Heart left ventricle (tissue), 16 donors: ENCODE measurements at regions of chr1 and their contacts with region 1.

Region 1: GRCh38 chr1:22052115-22053016 is at the start of gene CDC42:
- DNase-seq: peak; percentile 97 to 98 (median 98)
- ATAC-seq: peak; percentile 97 to 99 (median 98)
- H3K4me3 ChIP-seq: peak within 1 kb of the TSS; percentile 57 to 98 (median 78)
- H3K27ac ChIP-seq: peak within 1 kb of the TSS; percentile 94 to 100 (median 98)
- H3K4me1 ChIP-seq: peaks cover 12 to 56% (median 36%) of the 10 kb centered on the region in 12 donors
- H3K27me3 ChIP-seq: no peaks in the 10 kb centered on the region
- CTCF ChIP-seq: no peak
- POLR2A ChIP-seq: peak; percentile 67 to 97
- total RNA-seq, gene CDC42: 135 to 260 (median 189) TPM

Region 2: DNA sequence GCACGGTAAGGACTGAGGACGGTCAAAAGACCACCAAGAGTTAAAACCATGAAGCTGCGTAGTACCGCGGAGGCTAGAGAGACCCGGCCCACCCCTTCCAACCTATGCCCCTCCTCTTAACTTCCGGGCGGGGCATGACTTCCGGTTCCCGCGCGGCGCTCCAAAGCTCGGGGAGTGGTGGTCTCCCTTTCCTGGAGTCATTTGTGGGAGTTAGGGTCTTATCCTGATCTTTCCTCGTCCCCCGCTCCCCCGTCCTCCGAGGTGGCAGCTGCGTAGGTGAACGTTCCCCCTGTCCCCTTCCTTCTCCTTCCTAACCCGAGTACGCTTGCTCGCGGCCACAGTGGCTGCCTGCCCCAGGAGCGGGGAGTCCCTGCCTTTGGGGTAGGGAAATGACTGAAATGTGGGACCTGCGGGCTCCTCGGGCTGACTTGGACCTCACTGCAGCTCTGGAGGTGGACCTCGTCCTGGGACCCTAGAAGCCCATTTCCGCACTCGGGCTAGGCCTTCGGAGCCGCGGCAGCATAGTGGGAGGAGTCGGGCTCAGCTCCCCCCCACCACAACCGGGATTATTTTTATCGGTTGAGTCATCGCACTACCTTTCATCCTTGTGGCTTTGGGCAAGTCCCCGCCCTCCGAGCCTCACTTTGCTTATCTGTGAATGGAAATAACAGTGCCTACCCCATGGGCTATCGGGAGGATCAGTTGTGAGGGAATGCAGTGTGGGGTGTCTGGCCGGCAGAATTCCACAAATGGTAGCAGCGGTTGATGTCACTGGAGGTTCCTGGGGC is 26.8 kb before region 1 on chr1:
- intact Hi-C with region 1: loop called in 2 of 10 experiments (anchors 2 kb)
- DNase-seq: peak; percentile 86 to 92 (median 89)
- ATAC-seq: peak; percentile 95 to 98 (median 96)
- H3K4me3 ChIP-seq: peak overlapping the region; percentile 64 to 99 (median 96)
- H3K27ac ChIP-seq: peak overlapping the region; percentile 93 to 100 (median 99)
- H3K4me1 ChIP-seq: peaks cover 0 to 24% (median 13%) of the 10 kb centered on the region in 12 donors
- H3K27me3 ChIP-seq: no peaks in the 10 kb centered on the region
- CTCF ChIP-seq: no peak
- POLR2A ChIP-seq: peak in 1 of 2 donors; percentile 65